Activated CD4-positive, alpha-beta memory T cell treated with anti-CD3 and anti-CD28 coated beads for 36 hours (primary cell): ENCODE measurements at regions of chr9 and their contacts with region 1.

Region 1: GRCh38 chr9:34252670-34253459 is 74.0 kb downstream of the UBAP1 start:
- DNase-seq: peak; percentile 78
- H3K4me3 Mint-ChIP-seq: no peak overlapping the region
- H3K27ac Mint-ChIP-seq: no peak overlapping the region
- H3K4me1 Mint-ChIP-seq: no peaks in the 10 kb centered on the region
- H3K27me3 Mint-ChIP-seq: no peaks in the 10 kb centered on the region

Region 2: GRCh38 chr9:33946779-33947535 is 305.9 kb before region 1 on chr9:
- CTCF ChIA-PET with region 1: no interaction called
- POLR2A ChIA-PET with region 1: no interaction called
- intact Hi-C with region 1: no loop called
- DNase-seq: no peak
- H3K4me3 Mint-ChIP-seq: no peak overlapping the region
- H3K27ac Mint-ChIP-seq: no peak overlapping the region
- H3K4me1 Mint-ChIP-seq: no peaks in the 10 kb centered on the region
- H3K27me3 Mint-ChIP-seq: no peaks in the 10 kb centered on the region

Region 3: DNA sequence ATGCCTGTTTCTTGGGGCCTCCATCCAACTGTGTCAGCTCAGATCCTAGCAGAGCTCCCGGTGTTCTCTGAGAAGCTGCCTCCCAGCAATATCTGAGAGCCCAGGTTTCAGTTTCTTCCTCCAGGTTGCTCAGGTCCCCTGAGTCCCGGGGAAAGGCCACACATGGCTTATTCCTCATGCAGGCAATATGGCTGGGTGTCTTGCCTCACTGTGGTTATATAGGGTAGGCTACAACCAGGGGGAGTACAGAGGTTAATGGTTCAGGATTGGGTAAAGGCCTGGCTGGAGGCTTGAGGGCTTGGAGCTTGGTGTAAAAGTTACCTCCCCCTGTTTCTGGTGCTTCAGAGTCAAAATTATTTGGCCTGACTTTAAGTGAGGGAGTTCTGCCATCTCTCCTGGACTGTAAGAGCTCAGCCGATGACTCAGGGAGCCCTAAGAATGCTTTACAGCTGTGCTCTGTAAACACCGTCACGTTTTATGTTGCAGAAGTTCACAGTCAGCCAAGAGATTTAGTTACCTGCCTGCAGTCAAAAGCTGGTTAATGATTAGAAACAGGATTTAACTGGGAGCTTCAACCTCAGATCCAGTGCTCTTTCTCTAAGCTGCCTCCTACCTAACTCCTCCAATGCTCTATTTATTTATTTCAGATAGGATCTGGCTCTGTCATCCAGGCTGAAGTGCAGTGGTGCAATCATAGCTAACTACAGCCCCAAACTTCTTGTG is 179.8 kb before region 1 on chr9:
- CTCF ChIA-PET with region 1: interaction called, 15 read pairs
- POLR2A ChIA-PET with region 1: no interaction called
- intact Hi-C with region 1: loop called (anchors 10 kb)
- DNase-seq: no peak
- H3K4me3 Mint-ChIP-seq: no peak overlapping the region
- H3K27ac Mint-ChIP-seq: no peak overlapping the region
- H3K4me1 Mint-ChIP-seq: no peaks in the 10 kb centered on the region
- H3K27me3 Mint-ChIP-seq: no peaks in the 10 kb centered on the region

Region 4: GRCh38 chr9:34126207-34127034 is 126.4 kb before region 1 on chr9 and contains the start of gene DCAF12:
- CTCF ChIA-PET with region 1: interaction called, 9 read pairs
- POLR2A ChIA-PET with region 1: no interaction called
- intact Hi-C with region 1: loop called (anchors 1 kb)
- DNase-seq: peak; percentile 94
- H3K4me3 Mint-ChIP-seq: peak within 1 kb of the TSS; percentile 98
- H3K27ac Mint-ChIP-seq: peak within 1 kb of the TSS; percentile 94
- H3K4me1 Mint-ChIP-seq: peaks cover 35% of the 10 kb centered on the region
- H3K27me3 Mint-ChIP-seq: no peaks in the 10 kb centered on the region
- total RNA-seq, gene DCAF12: 32.5 to 35.4 TPM

Region 5: GRCh38 chr9:34178520-34179212 is 74.2 kb before region 1 on chr9 and contains the start of gene UBAP1:
- CTCF ChIA-PET with region 1: interaction called, 19 read pairs
- POLR2A ChIA-PET with region 1: interaction called, 3 read pairs
- intact Hi-C with region 1: loop called (anchors 2 kb)
- DNase-seq: peak; percentile 98
- H3K4me3 Mint-ChIP-seq: peak within 1 kb of the TSS; percentile 90
- H3K27ac Mint-ChIP-seq: peak within 1 kb of the TSS; percentile 96
- H3K4me1 Mint-ChIP-seq: peaks cover 12% of the 10 kb centered on the region
- H3K27me3 Mint-ChIP-seq: no peaks in the 10 kb centered on the region
- total RNA-seq, gene UBAP1: 30.5 to 32.0 TPM

Region 6: DNA sequence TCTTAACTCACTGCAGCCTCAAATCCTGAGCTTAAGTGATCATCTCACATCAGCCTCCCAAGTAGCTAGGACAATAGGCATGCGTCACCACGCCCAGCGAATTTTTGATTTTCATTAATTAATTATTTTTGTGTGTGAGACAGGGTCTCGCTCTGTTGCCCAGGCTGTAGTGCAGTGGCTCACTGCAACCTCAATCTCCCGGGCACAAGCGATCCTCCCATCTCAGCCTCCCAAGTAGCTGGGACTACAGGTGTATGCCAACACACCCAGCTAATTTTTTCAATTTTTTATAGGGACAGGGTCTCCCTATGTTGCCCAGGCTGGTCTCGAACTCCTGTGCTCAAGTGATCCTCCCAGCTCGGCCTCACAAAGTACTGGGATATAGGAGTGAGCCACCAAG is 32.6 kb before region 1 on chr9:
- CTCF ChIA-PET with region 1: interaction called, 10 read pairs
- POLR2A ChIA-PET with region 1: no interaction called
- intact Hi-C with region 1: no loop called
- DNase-seq: no peak
- H3K4me3 Mint-ChIP-seq: no peak overlapping the region
- H3K27ac Mint-ChIP-seq: no peak overlapping the region
- H3K4me1 Mint-ChIP-seq: peaks cover 9% of the 10 kb centered on the region
- H3K27me3 Mint-ChIP-seq: no peaks in the 10 kb centered on the region

Region 7: DNA sequence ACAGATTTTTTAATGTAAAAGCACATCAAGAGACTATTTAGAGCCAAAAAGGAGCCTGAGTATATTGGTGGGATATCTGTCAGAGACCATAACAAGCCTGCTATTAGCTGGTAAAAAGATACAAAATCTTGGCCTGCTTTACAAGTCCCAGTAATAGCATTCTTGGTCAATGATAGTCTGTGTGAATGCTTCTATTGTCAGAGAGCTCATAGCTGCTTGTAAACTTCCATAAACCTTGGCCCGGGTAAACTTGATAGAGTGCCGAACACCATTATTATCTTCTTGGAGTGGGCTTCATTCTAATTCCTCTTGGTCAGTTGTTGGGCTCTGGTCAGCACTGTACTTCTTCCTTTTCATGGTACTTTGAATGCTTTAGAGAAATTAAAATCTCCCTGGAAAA is 10.0 kb before region 1 on chr9:
- CTCF ChIA-PET with region 1: interaction called, 54 read pairs
- POLR2A ChIA-PET with region 1: no interaction called
- intact Hi-C with region 1: no loop called
- DNase-seq: no peak
- H3K4me3 Mint-ChIP-seq: no peak overlapping the region
- H3K27ac Mint-ChIP-seq: no peak overlapping the region
- H3K4me1 Mint-ChIP-seq: peaks cover 18% of the 10 kb centered on the region
- H3K27me3 Mint-ChIP-seq: no peaks in the 10 kb centered on the region

Region 8: GRCh38 chr9:34271265-34272006 is 18.6 kb after region 1 on chr9:
- CTCF ChIA-PET with region 1: interaction called, 11 read pairs
- POLR2A ChIA-PET with region 1: no interaction called
- intact Hi-C with region 1: no loop called
- DNase-seq: no peak
- H3K4me3 Mint-ChIP-seq: no peak overlapping the region
- H3K27ac Mint-ChIP-seq: no peak overlapping the region
- H3K4me1 Mint-ChIP-seq: no peaks in the 10 kb centered on the region
- H3K27me3 Mint-ChIP-seq: no peaks in the 10 kb centered on the region

Region 9: GRCh38 chr9:34601937-34602573 is 349.2 kb after region 1 on chr9:
- CTCF ChIA-PET with region 1: no interaction called
- POLR2A ChIA-PET with region 1: no interaction called
- intact Hi-C with region 1: no loop called
- DNase-seq: no peak
- H3K4me3 Mint-ChIP-seq: no peak overlapping the region
- H3K27ac Mint-ChIP-seq: no peak overlapping the region
- H3K4me1 Mint-ChIP-seq: no peaks in the 10 kb centered on the region
- H3K27me3 Mint-ChIP-seq: no peaks in the 10 kb centered on the region